Activated B cell treated with CpG ODN at 0.5 μM for 24 hours (primary cell): ENCODE measurements at regions of chr5 and their contacts with region 1.

Region 1: GRCh38 chr5:154647114-154647760 is 107.9 kb upstream of the LARP1 start:
- DNase-seq: no peak
- ATAC-seq: peak; percentile 58
- H3K4me3 Mint-ChIP-seq: peak overlapping the region; percentile 87
- H3K27ac Mint-ChIP-seq: no peak overlapping the region
- H3K4me1 Mint-ChIP-seq: peaks cover 16% of the 10 kb centered on the region
- H3K27me3 Mint-ChIP-seq: peaks cover 12% of the 10 kb centered on the region
- CTCF ChIP-seq: no peak

Region 2: DNA sequence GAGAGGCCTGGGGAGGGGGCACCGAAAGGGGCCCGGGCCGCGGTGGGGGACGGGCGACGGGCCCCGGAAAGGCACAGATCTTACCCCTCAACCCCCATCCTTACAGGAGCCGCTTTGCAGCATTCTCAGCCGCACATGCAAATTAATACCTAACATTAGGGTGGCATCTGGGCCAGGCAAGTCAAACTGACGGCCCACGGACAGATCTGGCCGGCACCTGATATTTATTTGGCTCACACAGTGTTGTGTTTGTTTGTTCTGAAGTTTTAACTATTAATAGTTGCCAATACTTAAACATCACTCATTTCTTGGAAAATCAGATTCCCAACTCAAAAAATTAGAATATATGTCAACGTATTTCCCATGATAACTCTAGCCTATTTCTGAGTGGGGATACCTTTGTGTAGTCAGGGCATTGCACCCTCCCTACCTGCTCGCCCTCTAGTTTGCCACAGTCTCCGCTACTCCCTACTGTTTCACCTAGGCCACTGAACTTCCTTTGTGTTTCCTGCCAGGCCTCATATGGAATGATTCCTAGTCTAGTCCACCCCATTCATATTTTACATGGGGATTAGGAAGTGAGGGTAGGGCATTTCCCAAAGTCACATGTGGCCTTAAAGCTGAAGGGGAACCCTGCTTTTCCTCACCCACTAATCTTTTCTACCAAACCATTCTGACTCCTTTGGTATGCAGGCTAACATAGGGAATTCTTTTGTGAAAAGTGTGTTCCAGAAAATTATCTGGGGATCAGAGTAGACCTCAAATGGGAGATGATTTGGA is 36.1 kb after region 1 on chr5:
- CTCF ChIA-PET with region 1: interaction called, 3 read pairs
- POLR2A ChIA-PET with region 1: no interaction called
- intact Hi-C with region 1: loop called (anchors 2 kb)
- DNase-seq: no peak
- ATAC-seq: peak; percentile 32
- H3K4me3 Mint-ChIP-seq: peak overlapping the region; percentile 80
- H3K27ac Mint-ChIP-seq: no peak overlapping the region
- H3K4me1 Mint-ChIP-seq: peaks cover 6% of the 10 kb centered on the region
- H3K27me3 Mint-ChIP-seq: peaks cover 4% of the 10 kb centered on the region
- CTCF ChIP-seq: no peak

Region 3: DNA sequence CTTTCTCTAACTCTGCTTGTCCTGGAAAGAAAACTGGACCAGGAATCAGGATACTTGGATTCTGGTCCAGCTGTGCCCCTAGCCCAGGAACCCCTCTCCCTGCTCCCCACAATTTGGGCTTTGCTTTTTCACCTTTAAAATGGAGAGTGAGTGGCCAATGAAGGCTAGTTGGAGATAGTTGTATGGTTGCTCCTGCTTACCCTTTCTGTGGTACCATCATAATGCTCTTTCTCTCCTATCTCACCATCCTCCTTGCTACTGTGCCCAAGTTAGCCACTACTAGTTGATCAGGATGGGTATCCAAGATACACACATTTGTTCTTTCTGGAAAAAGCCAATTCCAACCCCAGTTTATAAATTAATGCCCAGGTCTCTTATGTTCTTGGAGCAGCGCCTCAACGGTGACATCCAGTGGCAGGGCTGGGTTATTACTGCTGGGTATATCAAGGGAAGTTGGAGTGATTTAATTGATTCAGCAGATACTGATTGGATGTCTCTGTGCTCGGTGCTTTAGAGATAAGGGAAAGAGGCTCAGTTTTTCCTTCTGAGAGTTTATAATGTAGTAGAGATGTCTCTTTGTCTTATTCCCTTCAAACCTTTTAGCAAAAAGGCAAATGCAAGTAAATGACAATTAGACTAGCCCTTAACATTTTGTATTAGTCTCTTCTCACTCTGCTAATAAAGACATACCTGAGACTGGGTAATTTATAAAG is 164.6 kb after region 1 on chr5:
- CTCF ChIA-PET with region 1: interaction called, 14 read pairs
- POLR2A ChIA-PET with region 1: no interaction called
- intact Hi-C with region 1: loop called (anchors 1 kb)
- DNase-seq: peak; percentile 32
- ATAC-seq: peak; percentile 88
- H3K4me3 Mint-ChIP-seq: no peak overlapping the region
- H3K27ac Mint-ChIP-seq: no peak overlapping the region
- H3K4me1 Mint-ChIP-seq: peaks cover 26% of the 10 kb centered on the region
- H3K27me3 Mint-ChIP-seq: no peaks in the 10 kb centered on the region
- CTCF ChIP-seq: peak; percentile 95

Region 4: DNA sequence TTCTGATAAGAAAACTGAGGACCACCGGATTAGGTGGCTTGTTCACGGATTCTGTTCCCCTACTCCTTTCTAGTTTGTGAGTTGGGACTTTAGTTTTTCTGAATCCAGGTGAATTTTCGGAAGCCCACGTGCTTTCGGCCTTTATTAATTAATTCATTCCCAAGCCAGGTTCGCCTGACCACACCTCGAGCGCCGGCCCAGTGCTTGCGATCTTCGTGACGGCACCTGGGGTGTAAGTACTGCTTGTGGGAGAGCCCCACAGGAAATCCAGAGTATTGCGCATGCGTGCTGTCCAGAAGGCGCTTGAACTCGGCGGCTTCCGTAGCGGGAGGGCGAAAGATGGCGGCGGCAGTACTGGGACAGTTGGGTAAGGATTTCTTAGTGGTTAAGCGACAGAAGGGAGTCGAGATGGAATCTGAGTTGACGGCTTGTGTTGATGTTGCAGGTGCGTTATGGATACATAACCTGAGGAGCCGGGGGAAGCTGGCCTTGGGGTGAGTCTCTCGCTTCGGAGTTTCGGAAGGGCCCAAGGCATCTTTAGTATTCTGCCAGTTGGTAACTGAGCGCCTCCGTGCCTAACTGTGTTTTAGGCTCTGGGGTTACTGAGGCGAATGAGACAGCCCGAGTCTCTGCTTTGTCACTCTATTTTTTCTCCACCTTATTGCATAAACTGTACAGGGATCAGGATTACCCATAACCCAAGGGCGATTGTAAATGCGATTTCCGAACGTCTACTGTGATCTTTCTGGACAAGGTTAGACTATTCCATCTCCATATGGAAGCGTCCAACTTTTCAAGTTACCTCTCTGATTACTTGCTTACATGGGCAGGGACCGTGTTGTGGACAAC is 293.8 kb after region 1 on chr5 and contains the start of gene MRPL22:
- CTCF ChIA-PET with region 1: interaction called, 3 read pairs
- POLR2A ChIA-PET with region 1: no interaction called
- intact Hi-C with region 1: loop called (anchors 2 kb)
- DNase-seq: peak; percentile 88
- ATAC-seq: peak; percentile 63
- H3K4me3 Mint-ChIP-seq: peak within 1 kb of the TSS; percentile 99
- H3K27ac Mint-ChIP-seq: peak within 1 kb of the TSS; percentile 97
- H3K4me1 Mint-ChIP-seq: peaks cover 49% of the 10 kb centered on the region
- H3K27me3 Mint-ChIP-seq: no peaks in the 10 kb centered on the region
- CTCF ChIP-seq: no peak
- total RNA-seq, gene MRPL22: 41.9 and 42.6 TPM in 2 replicates